OCI-LY7 (cell line): ENCODE measurements at regions of chr2 and their contacts with region 1.

Region 1: GRCh38 chr2:63888490-63889402 is 47.0 kb downstream of the UGP2 start:
- DNase-seq: peak; percentile 71
- H3K4me3 ChIP-seq: no peak overlapping the region
- H3K27ac ChIP-seq: no peak overlapping the region
- H3K4me1 ChIP-seq: no peaks in the 10 kb centered on the region
- CTCF ChIP-seq: peak; percentile 96

Region 2: DNA sequence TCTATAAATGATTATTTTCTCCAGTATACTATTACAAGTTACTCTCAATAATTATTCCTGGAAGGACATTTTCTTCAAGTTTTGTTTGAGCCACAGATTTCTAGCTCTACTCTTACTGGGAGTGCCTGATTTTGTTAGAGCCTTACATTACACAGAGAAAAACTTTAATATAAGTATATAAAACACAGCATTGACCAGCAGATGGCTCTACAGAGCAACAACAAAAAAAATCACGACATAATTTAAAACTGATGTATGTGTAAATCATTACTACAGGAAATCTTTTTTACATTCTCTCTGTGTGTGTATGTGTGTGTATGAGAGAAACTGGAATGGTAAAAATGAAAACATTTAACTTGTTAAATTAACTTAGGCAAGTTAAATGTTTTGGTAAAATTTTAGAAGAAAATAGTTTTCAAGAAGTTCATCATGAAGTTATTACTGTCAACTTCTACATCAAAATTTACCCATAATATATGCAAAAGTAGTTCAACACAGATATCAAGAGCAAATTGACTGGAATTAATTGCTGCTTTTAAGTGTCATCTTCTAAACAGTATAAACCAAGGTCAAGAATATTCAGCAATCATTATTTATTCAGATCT is 196.6 kb before region 1 on chr2:
- CTCF ChIA-PET with region 1: no interaction called
- POLR2A ChIA-PET with region 1: no interaction called
- intact Hi-C with region 1: loop called (anchors 1 kb)
- DNase-seq: peak; percentile 58
- H3K4me3 ChIP-seq: no peak overlapping the region
- H3K27ac ChIP-seq: no peak overlapping the region
- H3K4me1 ChIP-seq: no peaks in the 10 kb centered on the region
- CTCF ChIP-seq: peak; percentile 91